ENCODE measurements at regions of chr10 and their contacts with region 1.

Region 1: GRCh38 chr10:124063750-124064603 is 29.4 kb downstream of the CHST15 start:
- DNase-seq: peak; percentile 81
- H3K4me3 Mint-ChIP-seq: peak overlapping the region; percentile 35
- H3K27ac Mint-ChIP-seq: peak overlapping the region; percentile 78
- H3K4me1 Mint-ChIP-seq: peaks cover 25% of the 10 kb centered on the region
- H3K27me3 Mint-ChIP-seq: no peaks in the 10 kb centered on the region
- CTCF ChIP-seq: no peak

Region 2: DNA sequence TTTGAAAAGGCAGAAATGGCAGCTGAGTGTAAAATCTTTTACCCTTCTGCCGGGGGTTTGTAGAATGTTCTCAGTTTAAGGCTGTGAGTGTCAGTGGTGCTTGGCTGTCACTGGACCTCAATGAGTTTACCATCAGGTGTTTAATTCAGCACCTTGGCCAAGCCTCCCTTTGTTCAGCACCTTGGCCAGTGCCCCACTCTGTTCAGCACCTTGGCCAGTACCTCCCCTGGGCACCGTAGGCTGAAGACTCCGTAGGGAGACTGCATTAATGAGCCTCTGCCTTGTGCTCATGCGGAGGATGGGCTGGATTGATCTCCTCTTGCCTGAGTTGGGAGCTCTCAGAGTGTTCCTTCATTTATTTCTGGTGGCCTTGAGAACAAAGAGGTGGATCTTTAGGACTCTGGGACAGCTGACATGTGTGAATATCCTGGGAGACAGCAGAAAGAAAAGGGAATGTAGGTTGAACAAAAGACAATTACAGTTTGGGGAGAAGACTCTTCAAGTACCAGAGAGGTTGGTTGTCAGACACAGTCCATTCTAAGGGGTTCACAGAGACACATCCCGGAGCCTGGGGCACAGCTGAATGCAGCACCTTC is 1152.0 kb before region 1 on chr10:
- CTCF ChIA-PET with region 1: no interaction called
- POLR2A ChIA-PET with region 1: no interaction called
- intact Hi-C with region 1: no loop called
- DNase-seq: peak; percentile 70
- H3K4me3 Mint-ChIP-seq: no peak overlapping the region
- H3K27ac Mint-ChIP-seq: no peak overlapping the region
- H3K4me1 Mint-ChIP-seq: no peaks in the 10 kb centered on the region
- H3K27me3 Mint-ChIP-seq: peaks cover 33% of the 10 kb centered on the region
- CTCF ChIP-seq: no peak

Region 3: DNA sequence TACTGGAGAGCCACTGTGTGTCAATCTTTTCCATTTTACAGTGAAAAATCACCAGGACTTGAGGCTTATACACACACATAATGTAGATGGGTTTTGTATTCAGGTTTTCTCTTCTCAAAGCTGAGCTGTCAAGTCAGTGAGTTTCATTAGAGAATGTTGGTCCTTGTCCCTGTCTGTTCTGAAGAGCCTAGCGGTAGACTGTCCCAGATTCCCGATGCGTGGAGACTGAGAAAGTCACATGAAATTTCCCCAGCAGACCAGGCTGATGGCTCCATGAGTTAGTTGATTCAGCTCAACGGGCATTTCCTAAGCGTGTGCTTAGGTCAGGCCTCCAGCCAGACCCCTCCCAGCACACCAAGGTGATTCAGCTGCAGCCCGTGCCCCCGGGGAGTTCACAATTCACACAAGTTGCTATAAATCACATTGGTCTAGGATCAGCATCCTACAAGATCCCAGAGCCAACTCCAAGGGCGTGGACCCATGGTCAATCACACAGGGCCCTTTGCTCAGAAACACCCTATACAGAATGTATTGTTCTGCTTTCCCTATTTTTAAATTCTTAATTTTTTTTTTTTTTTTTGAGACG is 12.3 kb after region 1 on chr10:
- CTCF ChIA-PET with region 1: interaction called, 4 read pairs
- POLR2A ChIA-PET with region 1: interaction called, 10 read pairs
- intact Hi-C with region 1: no loop called
- DNase-seq: peak; percentile 51
- H3K4me3 Mint-ChIP-seq: no peak overlapping the region
- H3K27ac Mint-ChIP-seq: no peak overlapping the region
- H3K4me1 Mint-ChIP-seq: peaks cover 4% of the 10 kb centered on the region
- H3K27me3 Mint-ChIP-seq: no peaks in the 10 kb centered on the region
- CTCF ChIP-seq: no peak